Right ventricle myocardium inferior (tissue), 1 donor: ENCODE measurements at regions of chr2 and their contacts with region 1.

Region 1: GRCh38 chr2:8514796-8515758 is 166.8 kb upstream of the ID2 start:
- DNase-seq: no peak
- ATAC-seq: peak; percentile 45

Region 2: GRCh38 chr2:8285081-8285480 is 230.0 kb before region 1 on chr2:
- intact Hi-C with region 1: loop called (anchors 10 kb)
- DNase-seq: no peak
- ATAC-seq: peak; percentile 49

Region 3: GRCh38 chr2:8324164-8324856 is 190.8 kb before region 1 on chr2:
- intact Hi-C with region 1: no loop called
- DNase-seq: no peak
- ATAC-seq: no peak

Region 4: DNA sequence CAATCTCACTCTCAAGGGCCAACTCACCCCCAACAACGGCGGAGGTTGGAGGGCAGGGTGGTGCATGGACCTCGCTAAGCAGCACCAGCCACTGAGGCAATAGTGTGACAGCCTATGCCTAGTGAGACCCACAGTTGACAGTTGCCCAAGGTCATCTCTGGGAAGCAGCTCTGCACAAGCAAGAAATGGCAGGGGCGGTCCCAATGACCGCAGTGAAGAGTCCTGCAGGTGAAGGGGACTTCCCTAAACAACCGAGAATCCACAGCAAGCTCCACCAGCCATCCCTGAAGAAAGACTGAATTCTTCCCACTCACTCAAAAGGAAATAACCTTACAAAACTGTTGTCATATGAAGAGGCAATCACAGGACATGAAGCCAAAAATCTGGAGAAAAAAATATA is 146.6 kb before region 1 on chr2:
- intact Hi-C with region 1: no loop called
- DNase-seq: no peak
- ATAC-seq: no peak

Region 5: GRCh38 chr2:8394131-8394530 is 120.9 kb before region 1 on chr2:
- intact Hi-C with region 1: no loop called
- DNase-seq: no peak
- ATAC-seq: no peak

Region 6: DNA sequence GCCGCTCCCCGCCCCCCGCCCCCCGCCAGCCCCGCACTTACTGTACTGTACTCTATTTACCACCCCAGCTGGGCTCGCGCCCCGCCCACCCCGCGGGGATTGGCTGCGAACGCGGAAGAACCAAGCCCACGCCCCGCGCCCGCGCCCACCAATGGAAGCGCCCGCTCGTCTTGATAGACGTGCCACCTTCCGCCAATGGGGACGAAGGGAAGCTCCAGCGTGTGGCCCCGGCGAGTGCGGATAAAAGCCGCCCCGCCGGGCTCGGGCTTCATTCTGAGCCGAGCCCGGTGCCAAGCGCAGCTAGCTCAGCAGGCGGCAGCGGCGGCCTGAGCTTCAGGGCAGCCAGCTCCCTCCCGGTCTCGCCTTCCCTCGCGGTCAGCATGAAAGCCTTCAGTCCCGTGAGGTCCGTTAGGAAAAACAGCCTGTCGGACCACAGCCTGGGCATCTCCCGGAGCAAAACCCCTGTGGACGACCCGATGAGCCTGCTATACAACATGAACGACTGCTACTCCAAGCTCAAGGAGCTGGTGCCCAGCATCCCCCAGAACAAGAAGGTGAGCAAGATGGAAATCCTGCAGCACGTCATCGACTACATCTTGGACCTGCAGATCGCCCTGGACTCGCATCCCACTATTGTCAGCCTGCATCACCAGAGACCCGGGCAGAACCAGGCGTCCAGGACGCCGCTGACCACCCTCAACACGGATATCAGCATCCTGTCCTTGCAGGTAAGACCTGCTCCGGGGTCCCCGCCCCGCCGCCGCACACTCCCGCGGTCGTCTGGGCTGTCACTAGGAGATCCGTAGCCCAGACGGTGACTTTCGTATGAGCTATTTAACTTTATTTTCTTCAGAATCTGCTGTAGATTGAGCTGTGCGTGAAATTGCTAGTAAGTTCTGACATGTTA is 167.0 kb after region 1 on chr2 and contains the start of gene ID2:
- intact Hi-C with region 1: no loop called
- DNase-seq: peak; percentile 100
- ATAC-seq: peak; percentile 87
- total RNA-seq, gene ID2: 31.3 TPM